CD4-positive, alpha-beta T cell (primary cell): ENCODE measurements at regions of chr10 and their contacts with region 1.

Region 1: DNA sequence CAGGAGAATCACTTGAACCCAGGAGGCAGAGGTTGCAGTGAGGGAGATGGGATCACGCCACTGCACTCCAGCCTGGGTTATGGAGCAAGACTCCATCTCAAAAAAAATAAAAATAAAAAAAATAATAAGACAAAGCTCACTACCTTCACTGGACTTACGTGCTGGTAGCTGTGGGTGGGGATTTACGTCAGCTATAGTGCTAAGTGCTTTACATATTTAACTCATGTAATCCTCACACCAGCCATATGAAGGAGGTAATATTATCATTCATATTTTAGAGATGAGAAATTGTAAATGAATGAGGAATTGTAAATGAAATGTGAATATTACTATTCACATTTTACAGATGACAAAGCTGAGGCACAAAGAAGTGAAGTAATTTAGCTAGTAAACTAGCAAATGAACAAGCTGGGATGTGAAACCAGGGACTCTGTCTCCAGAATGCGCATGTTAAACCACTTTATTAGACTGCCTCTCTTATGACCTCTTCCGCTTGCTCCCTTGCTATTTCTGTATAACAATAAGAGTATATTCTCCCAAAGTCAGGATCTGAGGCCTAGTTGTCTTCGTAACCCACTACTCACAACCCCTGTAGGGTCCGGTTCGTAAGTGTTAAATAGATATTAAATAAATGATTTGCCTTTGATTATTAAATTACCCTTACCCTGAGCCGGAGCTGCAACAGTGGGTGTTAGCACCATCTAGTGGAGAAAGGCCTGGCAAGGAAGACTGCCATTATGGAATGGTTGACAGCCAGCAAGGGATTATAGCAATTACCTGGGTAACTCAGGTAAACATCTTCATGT is 70.2 kb downstream of the HTR7 start:
- DNase-seq: peak in 7 of 14 experiments; percentile 3 to 52 (median 7)
- ATAC-seq: no peak
- H3K4me3 ChIP-seq: no peak overlapping the region
- H3K4me3 Mint-ChIP-seq: no peak overlapping the region
- H3K27ac ChIP-seq: no peak overlapping the region
- H3K27ac Mint-ChIP-seq: no peak overlapping the region
- H3K4me1 ChIP-seq: no peaks in the 10 kb centered on the region
- H3K4me1 Mint-ChIP-seq: no peaks in the 10 kb centered on the region
- H3K27me3 ChIP-seq: peaks cover 0 to 6% of the 10 kb centered on the region in 2 experiments
- H3K27me3 Mint-ChIP-seq: peaks cover 6% of the 10 kb centered on the region
- CTCF ChIP-seq: peak; percentile 53

Region 2: DNA sequence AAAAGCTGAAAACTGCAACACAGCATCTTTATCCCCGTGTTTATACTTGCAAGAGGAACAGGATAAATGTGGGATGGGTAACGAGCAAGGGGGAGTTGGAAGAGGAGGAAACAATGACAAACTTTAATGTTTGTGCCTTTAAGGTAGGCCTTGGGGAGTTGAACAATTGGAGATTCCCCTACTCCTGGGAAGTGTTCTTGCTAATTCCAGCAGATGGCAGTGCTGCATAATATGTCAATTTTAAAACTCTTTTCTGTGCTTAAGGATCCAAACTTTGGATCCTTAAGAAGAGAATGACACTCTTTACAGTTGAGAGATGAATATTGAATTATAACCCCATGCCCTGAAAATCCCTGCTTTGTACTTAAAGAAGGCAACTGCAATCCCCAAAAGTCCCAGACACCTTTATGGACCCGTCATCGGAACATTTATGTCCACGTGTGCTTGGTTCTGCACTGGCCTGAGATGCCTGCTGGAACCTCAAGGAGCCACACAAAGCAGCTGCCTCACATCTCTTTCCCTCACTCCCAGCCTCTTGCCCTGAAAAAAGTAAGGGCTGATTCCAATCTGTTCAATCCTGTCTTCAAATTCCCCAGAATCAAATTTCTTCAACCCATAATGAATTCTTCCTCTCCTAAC is 1361.2 kb before region 1 on chr10:
- CTCF ChIA-PET with region 1: no interaction called
- POLR2A ChIA-PET with region 1: no interaction called
- intact Hi-C with region 1: loop called in 1 of 2 experiments (anchors 5 kb)
- DNase-seq: peak in 4 of 14 experiments; percentile 15 to 62 (median 52)
- ATAC-seq: peak; percentile 71
- H3K4me3 ChIP-seq: no peak overlapping the region
- H3K4me3 Mint-ChIP-seq: no peak overlapping the region
- H3K27ac ChIP-seq: no peak overlapping the region
- H3K27ac Mint-ChIP-seq: no peak overlapping the region
- H3K4me1 ChIP-seq: no peaks in the 10 kb centered on the region
- H3K4me1 Mint-ChIP-seq: peaks cover 6% of the 10 kb centered on the region
- H3K27me3 ChIP-seq: peaks cover 0 to 6% of the 10 kb centered on the region in 2 experiments
- H3K27me3 Mint-ChIP-seq: no peaks in the 10 kb centered on the region
- CTCF ChIP-seq: peak; percentile 72

Region 3: DNA sequence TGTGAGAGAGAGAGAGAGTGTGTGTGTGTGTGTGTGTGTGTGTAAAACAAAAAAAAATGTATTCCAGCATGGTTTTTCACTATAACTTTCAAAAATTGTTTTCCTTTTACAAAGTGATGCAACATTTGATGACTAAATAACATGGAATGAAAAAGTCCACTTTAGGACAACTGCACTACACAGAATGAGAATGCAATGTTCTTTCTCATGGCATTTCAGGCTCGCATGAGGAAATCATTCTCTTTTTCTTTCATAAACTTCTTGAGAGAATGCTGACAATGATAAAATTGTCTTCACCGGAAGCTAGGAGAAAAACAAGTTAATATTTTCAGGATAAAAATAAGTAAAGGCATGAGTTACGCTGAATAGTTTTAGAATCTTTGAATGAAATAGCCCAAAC is 1305.9 kb before region 1 on chr10:
- CTCF ChIA-PET with region 1: no interaction called
- POLR2A ChIA-PET with region 1: no interaction called
- intact Hi-C with region 1: no loop called
- DNase-seq: no peak
- ATAC-seq: no peak
- H3K4me3 ChIP-seq: no peak overlapping the region
- H3K4me3 Mint-ChIP-seq: no peak overlapping the region
- H3K27ac ChIP-seq: no peak overlapping the region
- H3K27ac Mint-ChIP-seq: no peak overlapping the region
- H3K4me1 ChIP-seq: no peaks in the 10 kb centered on the region
- H3K4me1 Mint-ChIP-seq: no peaks in the 10 kb centered on the region
- H3K27me3 ChIP-seq: peaks cover 4 to 5% of the 10 kb centered on the region in 2 experiments
- H3K27me3 Mint-ChIP-seq: peaks cover 34% of the 10 kb centered on the region
- CTCF ChIP-seq: no peak

Region 4: GRCh38 chr10:90893190-90893589 is 105.6 kb after region 1 on chr10:
- CTCF ChIA-PET with region 1: no interaction called
- POLR2A ChIA-PET with region 1: no interaction called
- intact Hi-C with region 1: no loop called
- DNase-seq: no peak
- ATAC-seq: no peak
- H3K4me3 ChIP-seq: no peak overlapping the region
- H3K4me3 Mint-ChIP-seq: no peak overlapping the region
- H3K27ac ChIP-seq: no peak overlapping the region
- H3K27ac Mint-ChIP-seq: no peak overlapping the region
- H3K4me1 ChIP-seq: peaks cover 2% of the 10 kb centered on the region
- H3K4me1 Mint-ChIP-seq: peaks cover 40% of the 10 kb centered on the region
- H3K27me3 ChIP-seq: no peaks in the 10 kb centered on the region
- H3K27me3 Mint-ChIP-seq: no peaks in the 10 kb centered on the region
- CTCF ChIP-seq: no peak